ENCODE measurements at regions of chr9 and their contacts with region 1.

Region 1: GRCh38 chr9:120985810-120986222 is 59.2 kb upstream of the TRAF1 start:
- DNase-seq: no peak
- ATAC-seq: no peak
- H3K4me3 Mint-ChIP-seq: no peak overlapping the region
- H3K27ac Mint-ChIP-seq: no peak overlapping the region
- H3K4me1 Mint-ChIP-seq: no peaks in the 10 kb centered on the region
- H3K27me3 Mint-ChIP-seq: peaks cover 17% of the 10 kb centered on the region

Region 2: GRCh38 chr9:120868676-120869359 is 117.0 kb before region 1 on chr9:
- CTCF ChIA-PET with region 1: interaction called, 16 read pairs
- POLR2A ChIA-PET with region 1: no interaction called
- DNase-seq: peak; percentile 98
- ATAC-seq: peak; percentile 97
- H3K4me3 Mint-ChIP-seq: peak overlapping the region; percentile 82
- H3K27ac Mint-ChIP-seq: peak overlapping the region; percentile 99
- H3K4me1 Mint-ChIP-seq: peaks cover 50% of the 10 kb centered on the region
- H3K27me3 Mint-ChIP-seq: no peaks in the 10 kb centered on the region

Region 3: DNA sequence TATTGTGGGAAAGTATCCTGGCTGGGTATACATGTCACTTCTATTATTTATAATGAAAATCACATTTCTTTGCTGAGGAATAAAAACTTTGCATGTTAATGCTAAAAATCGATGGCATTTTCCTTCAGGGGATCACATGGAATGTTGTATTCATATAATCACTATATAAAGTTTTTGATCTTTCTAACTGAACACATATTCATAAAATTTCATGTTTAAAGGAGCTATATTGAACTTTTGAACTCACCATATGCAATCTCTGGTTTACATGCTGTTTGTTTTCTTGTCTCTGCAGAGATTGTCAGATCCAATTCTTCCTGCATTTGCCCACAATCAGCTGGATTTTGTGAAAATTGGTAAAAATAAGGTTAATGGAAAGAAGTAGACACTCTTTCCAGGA is 25.8 kb before region 1 on chr9:
- CTCF ChIA-PET with region 1: interaction called, 22 read pairs
- POLR2A ChIA-PET with region 1: no interaction called
- DNase-seq: no peak
- ATAC-seq: no peak
- H3K4me3 Mint-ChIP-seq: no peak overlapping the region
- H3K27ac Mint-ChIP-seq: no peak overlapping the region
- H3K4me1 Mint-ChIP-seq: no peaks in the 10 kb centered on the region
- H3K27me3 Mint-ChIP-seq: peaks cover 5% of the 10 kb centered on the region

Region 4: DNA sequence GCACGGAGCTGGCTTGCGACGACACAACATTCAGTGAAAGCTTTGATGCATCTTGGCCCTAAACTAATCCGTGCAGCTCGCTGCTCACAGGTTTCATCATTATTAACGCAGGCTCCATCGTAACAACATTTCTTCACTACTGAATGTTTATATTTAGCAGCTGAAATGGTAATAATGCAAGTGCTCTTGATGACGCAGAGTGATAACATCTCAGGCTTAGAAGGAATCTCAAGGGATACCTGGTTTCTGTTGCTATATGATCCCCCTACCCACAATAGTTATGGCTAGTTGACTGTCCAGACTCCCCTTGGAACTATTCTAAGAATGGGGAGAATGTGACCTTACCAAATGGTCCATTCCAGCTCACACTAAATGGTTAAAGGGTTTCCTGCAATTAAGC is 28.1 kb after region 1 on chr9:
- CTCF ChIA-PET with region 1: interaction called, 10 read pairs
- POLR2A ChIA-PET with region 1: interaction called, 3 read pairs
- DNase-seq: no peak
- ATAC-seq: no peak
- H3K4me3 Mint-ChIP-seq: no peak overlapping the region
- H3K27ac Mint-ChIP-seq: no peak overlapping the region
- H3K4me1 Mint-ChIP-seq: no peaks in the 10 kb centered on the region
- H3K27me3 Mint-ChIP-seq: peaks cover 1% of the 10 kb centered on the region

Region 5: GRCh38 chr9:121059998-121060636 is 74.3 kb after region 1 on chr9:
- CTCF ChIA-PET with region 1: interaction called, 98 read pairs
- POLR2A ChIA-PET with region 1: no interaction called
- DNase-seq: peak; percentile 42
- ATAC-seq: no peak
- H3K4me3 Mint-ChIP-seq: no peak overlapping the region
- H3K27ac Mint-ChIP-seq: no peak overlapping the region
- H3K4me1 Mint-ChIP-seq: peaks cover 14% of the 10 kb centered on the region
- H3K27me3 Mint-ChIP-seq: peaks cover 5% of the 10 kb centered on the region

Region 6: DNA sequence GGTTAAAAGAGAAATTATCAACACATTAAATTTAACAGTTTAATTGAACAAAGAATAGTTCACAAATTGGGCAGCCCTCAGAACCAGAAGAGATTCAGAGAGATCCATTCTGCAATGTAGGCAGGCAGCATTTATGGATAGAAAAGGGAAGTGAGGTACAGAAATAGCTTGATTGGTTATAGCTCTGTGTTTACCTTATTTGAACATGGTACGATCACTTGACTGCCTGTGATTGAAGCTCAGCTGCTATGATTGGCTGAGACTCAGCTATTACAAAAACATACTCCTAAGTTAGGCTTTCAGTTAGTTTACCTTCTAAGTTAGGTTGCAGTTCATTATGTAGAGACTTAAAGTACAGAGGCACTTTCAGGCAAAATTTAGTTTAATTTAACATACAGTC is 96.3 kb after region 1 on chr9:
- CTCF ChIA-PET with region 1: interaction called, 11 read pairs
- POLR2A ChIA-PET with region 1: no interaction called
- DNase-seq: no peak
- ATAC-seq: no peak
- H3K4me3 Mint-ChIP-seq: no peak overlapping the region
- H3K27ac Mint-ChIP-seq: no peak overlapping the region
- H3K4me1 Mint-ChIP-seq: peaks cover 13% of the 10 kb centered on the region
- H3K27me3 Mint-ChIP-seq: no peaks in the 10 kb centered on the region

Region 7: DNA sequence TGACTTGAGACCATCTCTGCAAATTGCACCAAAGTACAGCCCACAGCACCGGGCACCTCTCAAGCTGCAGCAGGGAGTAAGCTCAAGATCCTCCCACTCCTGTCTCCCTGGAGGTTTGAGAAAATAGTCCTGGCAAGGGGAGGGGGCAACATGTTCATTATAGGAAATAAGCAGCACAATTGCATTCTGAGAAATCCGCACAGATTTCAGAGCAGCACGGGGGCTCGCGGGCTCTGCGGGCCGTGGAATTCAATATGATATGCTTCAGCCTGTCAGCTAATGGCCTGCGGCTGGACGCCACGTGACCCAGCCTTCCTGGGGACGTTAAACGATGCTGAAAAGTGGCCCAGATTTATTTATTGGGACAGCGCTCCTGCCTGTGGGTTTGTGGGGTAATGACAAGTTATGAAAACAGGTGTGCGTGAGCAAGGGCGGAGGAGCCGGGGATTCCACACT is 822.0 kb after region 1 on chr9:
- CTCF ChIA-PET with region 1: no interaction called
- POLR2A ChIA-PET with region 1: no interaction called
- DNase-seq: no peak
- ATAC-seq: no peak
- H3K4me3 Mint-ChIP-seq: no peak overlapping the region
- H3K27ac Mint-ChIP-seq: no peak overlapping the region
- H3K4me1 Mint-ChIP-seq: no peaks in the 10 kb centered on the region
- H3K27me3 Mint-ChIP-seq: peaks cover 8% of the 10 kb centered on the region

Measured in activated CD8-positive, alpha-beta T cell treated with anti-CD3 and anti-CD28 coated beads, Interleukin-2, amount 10 ng/mL, durations not matched to agents 7 days and 5 days (primary cell).